A549 (cell line): ENCODE measurements at regions of chr19 and their contacts with region 1.

Region 1: DNA sequence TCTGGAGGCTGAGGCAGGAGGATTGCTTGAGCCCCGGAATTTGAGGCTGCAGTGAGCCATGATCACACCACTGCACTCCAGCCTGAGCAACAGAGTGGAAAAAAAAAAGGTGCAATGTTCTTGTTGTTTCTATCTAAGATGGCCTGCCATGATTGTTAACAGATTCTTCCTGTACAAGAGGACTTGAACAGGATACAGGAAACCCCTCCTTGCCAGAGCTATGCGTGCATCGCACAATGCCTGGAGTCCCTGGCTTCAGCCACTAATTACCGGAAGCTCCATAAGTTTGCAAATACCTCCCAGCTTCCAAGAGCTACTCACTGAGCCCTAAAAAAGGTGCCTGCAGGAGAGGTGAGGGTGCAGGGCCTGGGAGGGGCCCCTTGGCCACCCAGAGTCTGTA is 13.1 kb upstream of the HIF3A start:
- DNase-seq: no peak
- ATAC-seq: no peak
- H3K4me3 ChIP-seq: no peak overlapping the region
- H3K27ac ChIP-seq: no peak overlapping the region
- H3K4me1 ChIP-seq: peaks cover 1% of the 10 kb centered on the region
- CTCF ChIP-seq: no peak
- EP300 ChIP-seq: no peak
- POLR2A ChIP-seq: no peak
- RAD21 ChIP-seq: no peak

Region 2: DNA sequence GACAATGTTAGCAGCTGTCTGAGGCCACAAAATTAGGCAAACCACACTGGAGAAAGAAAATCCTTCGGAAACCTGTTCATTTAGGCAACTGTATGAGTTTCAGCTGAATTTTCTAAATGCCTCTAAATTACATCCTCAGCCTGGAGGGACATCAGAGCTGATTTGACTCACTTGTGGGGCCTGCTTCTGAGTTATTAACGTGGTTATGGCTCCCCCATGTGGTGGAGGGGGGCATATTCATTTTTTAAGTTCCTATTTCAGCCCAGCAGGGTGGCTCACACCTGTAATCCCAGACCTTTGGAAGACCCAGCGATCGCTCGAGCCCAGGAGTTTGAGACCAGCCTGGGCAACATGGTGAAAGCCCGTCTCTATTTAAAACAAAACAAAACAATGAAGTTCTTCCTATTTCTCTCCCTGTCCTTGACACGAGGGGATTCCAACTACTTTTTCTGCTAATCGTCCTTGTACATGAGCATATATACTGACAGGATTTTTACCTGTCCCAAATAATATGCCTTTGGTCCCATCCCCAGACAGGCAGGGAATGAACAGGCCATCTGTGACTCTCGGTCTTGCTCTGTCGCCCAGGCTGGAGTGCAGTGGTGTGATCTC is 18.4 kb before region 1 on chr19:
- CTCF ChIA-PET with region 1: interaction called, 103 read pairs
- POLR2A ChIA-PET with region 1: no interaction called
- DNase-seq: peak; percentile 86 to 91
- ATAC-seq: peak; percentile 89 to 95
- H3K4me3 ChIP-seq: no peak overlapping the region
- H3K27ac ChIP-seq: peak overlapping the region; percentile 14 to 70; a peak in 5 of 6 replicates
- H3K4me1 ChIP-seq: peaks cover 19% of the 10 kb centered on the region
- CTCF ChIP-seq: peak; percentile 99
- EP300 ChIP-seq: no peak
- POLR2A ChIP-seq: no peak
- RAD21 ChIP-seq: peak; percentile 99

Region 3: GRCh38 chr19:46346821-46347571 is 63.2 kb after region 1 on chr19 and contains the start of gene PPP5C:
- CTCF ChIA-PET with region 1: interaction called, 129 read pairs
- POLR2A ChIA-PET with region 1: no interaction called
- DNase-seq: peak; percentile 98 to 100
- ATAC-seq: peak; percentile 88 to 92
- H3K4me3 ChIP-seq: peak within 1 kb of the TSS; percentile 71
- H3K27ac ChIP-seq: peak within 1 kb of the TSS; percentile 92 to 97
- H3K4me1 ChIP-seq: peaks cover 44% of the 10 kb centered on the region
- CTCF ChIP-seq: peak; percentile 96
- EP300 ChIP-seq: no peak
- POLR2A ChIP-seq: peak; percentile 80
- RAD21 ChIP-seq: peak; percentile 53 to 69
- polyA plus RNA-seq, gene PPP5C: 107 and 126 TPM in 2 replicates

Region 4: DNA sequence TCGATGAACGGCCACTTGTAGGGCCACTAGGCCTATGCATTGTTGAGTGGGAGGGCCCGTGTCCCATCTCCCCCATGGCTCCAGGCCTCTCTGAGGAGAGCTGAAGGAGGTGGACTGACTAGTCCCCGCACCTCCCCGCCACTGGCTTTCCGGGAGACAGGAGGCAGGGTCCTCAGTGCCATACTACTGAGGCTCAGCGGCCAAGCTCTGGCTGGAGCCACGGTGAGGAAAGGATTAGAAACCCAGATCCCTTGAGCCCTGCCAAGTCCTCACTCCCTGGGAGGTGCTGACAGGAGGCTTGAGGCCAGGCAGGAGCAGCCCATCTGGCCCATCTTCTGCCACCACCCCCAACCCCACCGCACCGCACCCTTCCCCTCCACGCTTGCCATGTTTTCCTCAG is 100.6 kb after region 1 on chr19:
- CTCF ChIA-PET with region 1: interaction called, 66 read pairs
- POLR2A ChIA-PET with region 1: no interaction called
- DNase-seq: no peak
- ATAC-seq: no peak
- H3K4me3 ChIP-seq: no peak overlapping the region
- H3K27ac ChIP-seq: no peak overlapping the region
- H3K4me1 ChIP-seq: no peaks in the 10 kb centered on the region
- CTCF ChIP-seq: no peak
- EP300 ChIP-seq: no peak
- POLR2A ChIP-seq: no peak
- RAD21 ChIP-seq: no peak

Region 5: DNA sequence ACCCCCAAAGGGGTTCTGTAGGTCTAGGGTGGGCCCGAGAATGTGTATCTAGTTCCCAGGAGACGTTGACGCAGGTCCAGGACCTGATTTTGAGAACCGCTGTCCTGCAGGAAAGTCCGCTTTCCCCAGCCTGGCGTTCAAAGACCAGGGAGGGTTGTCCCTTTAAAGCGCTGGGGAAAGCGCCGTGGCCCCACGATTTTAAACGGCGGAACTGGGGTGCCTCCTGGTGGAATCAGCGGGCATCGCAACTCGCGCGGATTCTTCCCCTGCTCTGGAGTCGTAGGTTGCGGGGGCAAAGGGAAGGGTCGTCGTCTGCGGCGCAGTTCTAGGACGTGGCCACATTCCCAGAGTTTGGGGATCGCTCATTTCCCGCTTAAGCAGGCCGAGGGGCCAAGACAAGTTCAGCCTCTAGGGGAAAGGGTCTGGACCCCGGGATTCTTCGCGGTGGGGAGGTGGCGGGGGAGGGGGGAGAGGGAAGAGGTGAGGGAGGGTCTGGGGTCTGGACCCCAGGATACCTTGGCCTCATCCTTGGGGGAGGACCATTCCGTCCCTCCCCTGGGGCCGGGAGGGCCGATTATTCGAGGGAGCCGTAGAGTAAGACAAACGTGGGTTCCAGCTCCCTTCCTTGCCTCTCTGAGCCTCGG is 204.2 kb after region 1 on chr19:
- CTCF ChIA-PET with region 1: interaction called, 76 read pairs
- POLR2A ChIA-PET with region 1: no interaction called
- DNase-seq: peak; percentile 71 to 86
- ATAC-seq: peak; percentile 75 to 93
- H3K4me3 ChIP-seq: peak overlapping the region; percentile 46
- H3K27ac ChIP-seq: peak overlapping the region; percentile 65 to 72; a peak in 5 of 6 replicates
- H3K4me1 ChIP-seq: peaks cover 10% of the 10 kb centered on the region; the same call in 1 of the 3 replicates
- CTCF ChIP-seq: peak; percentile 98
- EP300 ChIP-seq: no peak
- POLR2A ChIP-seq: no peak
- RAD21 ChIP-seq: peak; percentile 99 to 100

Region 6: DNA sequence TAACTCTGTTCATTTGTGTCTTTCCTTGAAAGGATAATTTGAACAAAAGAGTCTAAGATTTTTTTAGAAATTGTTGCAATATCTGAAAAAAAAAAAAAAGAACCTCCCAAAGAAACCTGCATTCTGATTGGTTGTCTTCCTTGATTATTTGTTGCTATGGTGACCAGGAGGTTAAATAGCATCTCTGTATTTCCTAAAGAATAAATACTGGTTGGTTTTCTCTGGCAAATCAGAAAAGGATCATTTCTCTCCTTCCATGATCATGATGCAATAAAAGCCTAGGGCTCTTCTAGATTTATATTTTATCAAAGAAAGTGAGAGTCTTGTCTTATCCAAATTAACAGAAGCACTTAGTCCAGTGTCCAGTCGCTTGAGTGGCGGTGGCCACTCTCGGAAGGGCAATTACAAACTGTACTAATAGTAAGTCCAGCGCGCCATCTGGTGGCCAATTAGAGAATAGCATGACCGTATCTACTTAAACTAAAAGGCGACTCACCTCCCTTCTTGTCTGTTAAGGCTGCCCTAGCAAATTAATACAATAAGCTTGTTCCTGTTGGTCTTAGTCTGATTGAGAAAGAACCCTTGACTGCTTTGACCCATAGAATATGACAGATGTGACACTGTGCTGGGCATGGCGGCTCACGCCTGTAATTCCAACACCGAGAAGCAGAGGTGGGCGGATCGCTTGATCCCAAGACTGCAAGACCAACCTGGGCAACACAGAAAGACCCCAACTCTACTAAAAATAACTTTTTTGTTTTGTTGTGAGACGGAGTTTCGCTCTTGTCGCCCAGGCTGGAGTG is 258.9 kb after region 1 on chr19:
- CTCF ChIA-PET with region 1: interaction called, 28 read pairs
- POLR2A ChIA-PET with region 1: no interaction called
- DNase-seq: peak; percentile 69 to 94
- ATAC-seq: peak; percentile 90 to 92
- H3K4me3 ChIP-seq: no peak overlapping the region
- H3K27ac ChIP-seq: no peak overlapping the region
- H3K4me1 ChIP-seq: no peaks in the 10 kb centered on the region
- CTCF ChIP-seq: peak; percentile 98
- EP300 ChIP-seq: no peak
- POLR2A ChIP-seq: no peak
- RAD21 ChIP-seq: peak; percentile 91 to 93